ENCODE measurements at regions of chr3 and their contacts with region 1.

Region 1: GRCh38 chr3:32238453-32239306 is at the start of gene CMTM8:
- DNase-seq: peak; percentile 43 to 77 (median 68)
- H3K4me3 ChIP-seq: peak within 1 kb of the TSS; percentile 43 to 83 (median 74)
- H3K27ac ChIP-seq: no peak within 1 kb of the TSS
- H3K4me1 ChIP-seq: peaks cover 0 to 24% (median 23%) of the 10 kb centered on the region in 4 experiments
- H3K27me3 ChIP-seq: no peaks in the 10 kb centered on the region

Region 2: DNA sequence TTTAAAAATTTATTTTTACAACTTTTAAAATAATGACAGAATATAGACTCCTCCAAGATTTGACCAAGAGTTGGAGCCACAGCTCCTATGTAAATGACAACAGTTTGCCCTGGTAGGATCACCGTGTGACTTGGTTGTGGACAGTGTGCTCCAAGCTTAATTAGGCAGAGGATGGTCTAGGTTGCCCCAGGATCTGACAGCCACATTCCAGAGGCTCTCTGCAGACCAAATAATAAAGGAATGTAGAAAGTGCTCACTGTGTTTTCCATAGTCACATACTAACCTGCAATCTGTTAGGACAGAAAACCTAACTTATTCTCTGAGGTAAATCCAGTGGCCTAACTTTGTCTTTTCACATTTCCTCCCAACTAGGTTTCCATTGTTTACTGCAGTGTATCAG is 73.2 kb before region 1 on chr3:
- CTCF ChIA-PET with region 1: no interaction called
- POLR2A ChIA-PET with region 1: no interaction called
- DNase-seq: no peak
- H3K4me3 ChIP-seq: no peak overlapping the region
- H3K27ac ChIP-seq: no peak overlapping the region
- H3K4me1 ChIP-seq: no peaks in the 10 kb centered on the region
- H3K27me3 ChIP-seq: no peaks in the 10 kb centered on the region

Region 3: GRCh38 chr3:32177702-32178198 is 60.9 kb before region 1 on chr3:
- CTCF ChIA-PET with region 1: interaction called, 43 read pairs
- POLR2A ChIA-PET with region 1: no interaction called
- DNase-seq: peak; percentile 85 to 86 (median 85)
- H3K4me3 ChIP-seq: peak overlapping the region in 1 of 7 experiments; percentile 30
- H3K27ac ChIP-seq: no peak overlapping the region
- H3K4me1 ChIP-seq: peaks cover 0 to 8% (median 4%) of the 10 kb centered on the region in 4 experiments
- H3K27me3 ChIP-seq: no peaks in the 10 kb centered on the region

Region 4: GRCh38 chr3:32285891-32286290 is 47.2 kb after region 1 on chr3:
- CTCF ChIA-PET with region 1: interaction called, 13 read pairs
- POLR2A ChIA-PET with region 1: no interaction called
- DNase-seq: peak in 1 of 3 donors; percentile 17
- H3K4me3 ChIP-seq: peak overlapping the region in 1 of 7 experiments; percentile 5
- H3K27ac ChIP-seq: no peak overlapping the region
- H3K4me1 ChIP-seq: peaks cover 12 to 43% (median 28%) of the 10 kb centered on the region in 4 experiments
- H3K27me3 ChIP-seq: no peaks in the 10 kb centered on the region

Region 5: DNA sequence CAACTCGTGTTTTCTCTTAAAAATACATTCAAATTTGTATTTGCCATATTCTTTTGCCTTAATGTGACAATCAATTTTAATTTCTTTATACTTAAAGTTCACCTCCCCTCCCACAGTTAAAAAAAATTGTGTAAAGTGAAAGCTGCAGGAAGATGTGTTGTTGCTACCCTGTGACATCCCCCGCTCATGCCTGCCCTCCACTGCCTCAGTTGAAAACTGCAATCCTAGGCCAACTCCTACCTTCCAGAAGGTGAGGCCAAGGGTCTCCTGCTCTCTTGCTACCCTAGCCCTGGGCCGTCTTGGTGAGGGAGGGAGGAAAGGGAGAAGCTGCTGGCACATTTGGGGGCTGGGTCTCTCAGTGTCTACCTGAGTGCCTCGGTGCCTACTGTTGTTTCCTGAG is 96.0 kb after region 1 on chr3:
- CTCF ChIA-PET with region 1: interaction called, 15 read pairs
- POLR2A ChIA-PET with region 1: no interaction called
- DNase-seq: peak; percentile 46 to 60 (median 56)
- H3K4me3 ChIP-seq: no peak overlapping the region
- H3K27ac ChIP-seq: no peak overlapping the region
- H3K4me1 ChIP-seq: no peaks in the 10 kb centered on the region
- H3K27me3 ChIP-seq: no peaks in the 10 kb centered on the region